ENCODE measurements at regions of chr16 and their contacts with region 1.

Region 1: GRCh38 chr16:73204366-73205156 is 156.6 kb upstream of the ZFHX3 start:
- DNase-seq: no peak
- ATAC-seq: no peak

Region 2: GRCh38 chr16:72203401-72203800 is 1001.2 kb before region 1 on chr16:
- intact Hi-C with region 1: no loop called
- DNase-seq: no peak
- ATAC-seq: peak; percentile 72

Region 3: GRCh38 chr16:73172241-73172972 is 32.2 kb before region 1 on chr16:
- intact Hi-C with region 1: no loop called
- DNase-seq: peak; percentile 95
- ATAC-seq: peak; percentile 95

Region 4: DNA sequence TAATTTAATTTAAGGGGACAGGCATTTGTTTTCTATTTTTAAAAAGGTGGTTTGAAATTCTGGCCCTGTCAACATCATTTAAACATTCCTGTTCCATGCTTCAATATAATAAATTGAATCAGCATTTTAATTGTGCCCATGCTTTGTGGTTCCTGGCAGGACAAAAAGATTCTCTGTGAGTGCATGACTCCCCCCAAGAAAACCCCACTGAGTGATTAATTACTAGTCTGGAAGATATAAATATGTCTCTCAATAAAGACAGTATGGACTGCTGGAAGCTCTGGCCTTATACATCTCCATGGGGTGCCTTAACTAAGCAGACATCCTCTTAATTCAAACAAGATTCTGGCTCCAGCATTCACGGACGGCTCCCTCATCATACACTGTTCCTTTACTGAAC is 997.0 kb after region 1 on chr16:
- intact Hi-C with region 1: loop called (anchors 5 kb)
- DNase-seq: no peak
- ATAC-seq: no peak

Measured in sciatic nerve (tissue), 2 donors.